Activated T-helper 1 cell treated with anti-CD3 and anti-CD28 coated beads, Interleukin-12 subunit alpha, Interleukin-12 subunit beta, Interleukin-2, Interleukin-4 antibody, amounts not matched to agents 30 ng/mL and 10 ng/mL and 1 ng/mL, durations not matched to agents 14 hours and 24 hours and 36 hours (primary cell): ENCODE measurements at regions of chr6 and their contacts with region 1.

Region 1: DNA sequence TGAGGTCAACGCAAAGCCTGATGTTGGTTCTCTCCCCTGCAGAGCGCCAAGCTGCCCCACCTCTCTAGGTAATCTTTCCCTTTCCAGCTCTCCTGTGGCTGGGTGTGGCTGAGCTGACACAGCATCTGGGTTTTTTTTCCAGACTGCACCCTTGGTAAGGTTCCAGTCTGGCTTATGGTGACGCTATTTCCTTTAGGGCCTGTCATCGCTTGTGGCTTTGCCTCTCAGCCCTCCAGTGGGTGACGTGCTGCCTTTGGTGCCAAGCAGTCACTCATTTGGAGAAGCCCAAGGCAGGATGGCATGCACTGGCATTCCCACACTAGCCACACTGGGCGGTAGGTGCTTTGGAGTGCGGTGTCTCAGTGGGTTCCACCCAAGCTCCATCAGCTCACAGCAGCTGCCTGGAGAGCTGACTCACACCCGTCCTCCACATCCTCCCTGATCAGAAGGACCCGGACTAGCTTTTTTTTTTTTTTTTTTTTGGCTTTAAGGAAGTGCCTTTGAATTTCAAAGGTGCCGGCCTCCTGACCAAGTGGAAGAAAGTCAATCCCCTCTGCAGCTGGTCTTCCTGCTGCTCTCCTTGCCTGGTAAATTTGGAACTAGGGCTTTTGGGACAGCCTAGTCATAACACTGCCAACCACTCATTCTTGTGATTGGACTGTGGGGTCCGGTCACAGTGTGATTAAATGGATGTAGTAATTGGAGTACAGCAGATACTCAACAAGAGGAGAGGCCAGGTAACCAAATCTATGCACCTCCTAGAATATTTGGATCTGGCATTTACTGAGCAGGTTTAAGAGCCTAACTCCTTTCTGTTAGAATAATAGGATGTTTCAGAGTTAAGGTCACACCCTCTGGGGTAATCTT is 153.6 kb downstream of the CD83 start:
- DNase-seq: peak; percentile 66
- H3K4me3 Mint-ChIP-seq: peak overlapping the region; percentile 62
- H3K27ac Mint-ChIP-seq: peak overlapping the region; percentile 90
- H3K4me1 Mint-ChIP-seq: peaks cover 40% of the 10 kb centered on the region
- H3K27me3 Mint-ChIP-seq: no peaks in the 10 kb centered on the region

Region 2: GRCh38 chr6:13654496-13654895 is 616.7 kb before region 1 on chr6:
- intact Hi-C with region 1: no loop called
- DNase-seq: no peak
- H3K4me3 Mint-ChIP-seq: no peak overlapping the region
- H3K27ac Mint-ChIP-seq: no peak overlapping the region
- H3K4me1 Mint-ChIP-seq: peaks cover 19% of the 10 kb centered on the region
- H3K27me3 Mint-ChIP-seq: no peaks in the 10 kb centered on the region

Region 3: DNA sequence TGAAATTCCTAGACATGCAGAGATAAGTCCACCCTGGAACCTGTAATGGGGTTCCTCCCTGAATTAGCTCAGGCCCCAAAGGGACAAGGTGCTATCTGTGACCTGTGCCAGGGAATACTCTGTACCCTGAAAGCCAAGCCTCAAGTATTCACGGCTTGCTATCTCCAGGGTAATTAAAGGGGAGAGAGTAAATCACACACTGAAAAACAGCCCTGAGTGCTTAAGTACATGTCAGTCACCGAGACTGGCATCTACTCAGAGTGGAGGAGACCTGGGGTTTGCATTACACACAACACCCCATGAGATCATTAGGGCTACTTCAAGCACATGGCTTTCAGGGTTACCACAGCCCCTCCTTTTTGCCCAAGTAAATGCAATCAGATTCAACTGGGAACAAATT is 34.5 kb after region 1 on chr6:
- intact Hi-C with region 1: no loop called
- DNase-seq: no peak
- H3K4me3 Mint-ChIP-seq: no peak overlapping the region
- H3K27ac Mint-ChIP-seq: no peak overlapping the region
- H3K4me1 Mint-ChIP-seq: peaks cover 6% of the 10 kb centered on the region
- H3K27me3 Mint-ChIP-seq: peaks cover 8% of the 10 kb centered on the region

Region 4: DNA sequence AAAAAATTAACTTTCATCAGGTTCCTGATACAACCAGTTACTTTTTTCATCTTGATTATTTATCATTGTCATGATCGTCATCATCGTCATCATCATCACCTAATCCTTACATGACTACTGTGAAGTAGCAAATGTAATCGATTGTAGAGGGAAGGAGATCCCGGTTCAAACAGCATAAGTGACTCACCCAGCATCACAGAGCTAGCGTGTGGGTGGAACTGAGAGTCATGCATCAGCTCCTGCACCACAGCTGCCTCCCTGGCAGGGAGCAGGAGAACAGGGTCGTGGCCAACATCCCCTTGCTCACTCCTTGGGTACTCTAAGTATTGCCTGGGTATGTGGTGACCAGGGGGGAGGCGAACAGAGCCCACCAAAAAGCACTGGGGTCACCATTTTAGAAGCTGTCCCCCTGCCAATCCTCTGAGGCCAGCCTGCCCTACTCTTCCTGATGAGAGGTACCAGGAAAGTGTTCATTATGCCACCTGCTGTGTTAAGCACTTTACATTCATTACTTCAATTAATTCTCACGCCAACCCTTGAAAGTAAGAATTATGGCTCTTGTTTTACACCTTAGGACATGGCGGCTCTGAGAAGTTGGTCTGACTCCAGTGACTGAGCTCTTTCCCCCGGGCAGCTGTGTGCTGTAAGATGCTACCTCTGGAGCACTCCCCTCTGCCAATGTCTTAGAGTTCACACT is 271.7 kb after region 1 on chr6:
- intact Hi-C with region 1: loop called (anchors 5 kb)
- DNase-seq: peak; percentile 10
- H3K4me3 Mint-ChIP-seq: no peak overlapping the region
- H3K27ac Mint-ChIP-seq: peak overlapping the region; percentile 64
- H3K4me1 Mint-ChIP-seq: peaks cover 26% of the 10 kb centered on the region
- H3K27me3 Mint-ChIP-seq: peaks cover 1% of the 10 kb centered on the region